ENCODE measurements at regions of chr16 and their contacts with region 1.

Region 1: DNA sequence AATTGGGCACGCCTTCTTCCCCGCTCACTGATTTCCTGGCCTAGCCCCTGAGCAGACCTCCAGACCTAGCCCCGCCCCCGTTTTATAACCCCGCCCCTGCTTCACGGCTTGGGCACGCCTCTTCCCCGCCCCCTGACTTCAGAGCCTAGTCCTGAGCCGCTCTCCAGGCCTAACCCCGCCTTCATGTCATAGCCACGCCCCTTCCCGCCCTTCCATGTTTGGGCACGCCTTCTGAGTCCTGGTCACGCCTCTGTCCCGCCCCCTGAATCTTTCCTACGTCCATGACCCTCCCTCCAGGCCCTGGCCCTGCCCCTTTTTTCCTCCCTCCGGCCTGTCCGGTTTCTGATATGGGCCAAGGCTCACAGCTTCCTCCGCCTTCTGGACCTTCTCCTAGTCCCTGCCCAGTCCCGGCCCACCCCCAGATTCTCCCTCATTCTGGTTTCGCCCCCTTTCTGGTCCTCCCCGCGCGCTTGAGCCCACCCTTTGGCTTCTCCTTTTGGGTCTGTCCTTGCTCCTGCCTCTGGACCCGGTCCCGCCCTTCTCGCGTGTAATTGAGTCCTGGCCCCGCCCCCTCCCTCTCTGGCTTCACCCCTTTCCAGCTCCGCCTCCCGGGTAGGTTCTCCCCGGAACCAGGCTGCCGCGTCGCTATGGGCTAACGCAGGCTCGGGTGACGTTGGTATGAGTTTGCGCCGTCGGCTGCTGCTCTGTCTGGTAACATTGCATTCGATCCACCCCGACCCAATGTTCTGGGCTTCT is 15.1 kb upstream of the EEF2K start:
- DNase-seq: peak; percentile 100
- ATAC-seq: peak; percentile 71
- H3K4me3 Mint-ChIP-seq: peak overlapping the region; percentile 94
- H3K27ac Mint-ChIP-seq: peak overlapping the region; percentile 100
- H3K4me1 Mint-ChIP-seq: peaks cover 59% of the 10 kb centered on the region
- H3K27me3 Mint-ChIP-seq: peaks cover 2% of the 10 kb centered on the region
- CTCF ChIP-seq: no peak

Region 2: GRCh38 chr16:21952793-21953540 is 238.0 kb before region 1 on chr16 and contains the start of gene UQCRC2:
- CTCF ChIA-PET with region 1: interaction called, 13 read pairs
- POLR2A ChIA-PET with region 1: interaction called, 6 read pairs
- intact Hi-C with region 1: loop called (anchors 5 kb)
- DNase-seq: peak; percentile 94
- ATAC-seq: peak; percentile 93
- H3K4me3 Mint-ChIP-seq: peak within 1 kb of the TSS; percentile 100
- H3K27ac Mint-ChIP-seq: peak within 1 kb of the TSS; percentile 98
- H3K4me1 Mint-ChIP-seq: peaks cover 53% of the 10 kb centered on the region
- H3K27me3 Mint-ChIP-seq: no peaks in the 10 kb centered on the region
- CTCF ChIP-seq: no peak
- total RNA-seq, gene UQCRC2: 356 to 383 TPM

Region 3: GRCh38 chr16:22001591-22001990 is 189.4 kb before region 1 on chr16:
- CTCF ChIA-PET with region 1: interaction called, 82 read pairs
- POLR2A ChIA-PET with region 1: interaction called, 8 read pairs
- intact Hi-C with region 1: loop called (anchors 2 kb)
- DNase-seq: no peak
- ATAC-seq: no peak
- H3K4me3 Mint-ChIP-seq: peak overlapping the region; percentile 31
- H3K27ac Mint-ChIP-seq: no peak overlapping the region
- H3K4me1 Mint-ChIP-seq: peaks cover 10% of the 10 kb centered on the region
- H3K27me3 Mint-ChIP-seq: no peaks in the 10 kb centered on the region
- CTCF ChIP-seq: no peak

Region 4: GRCh38 chr16:22070361-22071330 is 120.3 kb before region 1 on chr16:
- CTCF ChIA-PET with region 1: interaction called, 81 read pairs
- POLR2A ChIA-PET with region 1: no interaction called
- intact Hi-C with region 1: no loop called
- DNase-seq: no peak
- ATAC-seq: no peak
- H3K4me3 Mint-ChIP-seq: no peak overlapping the region
- H3K27ac Mint-ChIP-seq: no peak overlapping the region
- H3K4me1 Mint-ChIP-seq: peaks cover 1% of the 10 kb centered on the region
- H3K27me3 Mint-ChIP-seq: no peaks in the 10 kb centered on the region
- CTCF ChIP-seq: no peak

Region 5: GRCh38 chr16:22206013-22206841 is 15.3 kb after region 1 on chr16 and contains the start of gene EEF2K:
- CTCF ChIA-PET with region 1: interaction called, 41 read pairs
- POLR2A ChIA-PET with region 1: interaction called, 113 read pairs
- intact Hi-C with region 1: no loop called
- DNase-seq: peak; percentile 93
- ATAC-seq: peak; percentile 80
- H3K4me3 Mint-ChIP-seq: peak within 1 kb of the TSS; percentile 97
- H3K27ac Mint-ChIP-seq: peak within 1 kb of the TSS; percentile 96
- H3K4me1 Mint-ChIP-seq: peaks cover 40% of the 10 kb centered on the region
- H3K27me3 Mint-ChIP-seq: no peaks in the 10 kb centered on the region
- CTCF ChIP-seq: peak; percentile 59
- total RNA-seq, gene EEF2K: 28.6 to 31.2 TPM

Measured in activated CD8-positive, alpha-beta T cell treated with anti-CD3 and anti-CD28 coated beads for 36 hours (primary cell).